ENCODE measurements at regions of chr17 and their contacts with region 1.

Region 1: GRCh38 chr17:46727572-46728348 is 90.7 kb downstream of the WNT3 start:
- DNase-seq: no peak
- ATAC-seq: no peak
- H3K4me3 ChIP-seq: no peak overlapping the region
- H3K27ac ChIP-seq: no peak overlapping the region
- H3K4me1 ChIP-seq: no peaks in the 10 kb centered on the region
- H3K27me3 ChIP-seq: no peaks in the 10 kb centered on the region
- CTCF ChIP-seq: no peak

Region 2: GRCh38 chr17:46795379-46795952 is 67.7 kb after region 1 on chr17:
- intact Hi-C with region 1: loop called in 1 of 10 experiments (anchors 10 kb)
- DNase-seq: no peak
- ATAC-seq: no peak
- H3K4me3 ChIP-seq: no peak overlapping the region
- H3K27ac ChIP-seq: no peak overlapping the region
- H3K4me1 ChIP-seq: no peaks in the 10 kb centered on the region
- H3K27me3 ChIP-seq: peaks cover 0 to 57% (median 52%) of the 10 kb centered on the region in 7 donors
- CTCF ChIP-seq: no peak

Measured in heart right ventricle (tissue), 16 donors.